Body of pancreas (tissue), 4 donors: ENCODE measurements at regions of chr3 and their contacts with region 1.

Region 1: GRCh38 chr3:168051531-168052471 is 43.9 kb downstream of the GOLIM4 start:
- DNase-seq: no peak
- ATAC-seq: no peak
- H3K4me3 ChIP-seq: no peak overlapping the region
- H3K27ac ChIP-seq: no peak overlapping the region
- H3K4me1 ChIP-seq: peaks cover 18% of the 10 kb centered on the region
- H3K27me3 ChIP-seq: no peaks in the 10 kb centered on the region
- CTCF ChIP-seq: no peak
- POLR2A ChIP-seq: no peak

Region 2: DNA sequence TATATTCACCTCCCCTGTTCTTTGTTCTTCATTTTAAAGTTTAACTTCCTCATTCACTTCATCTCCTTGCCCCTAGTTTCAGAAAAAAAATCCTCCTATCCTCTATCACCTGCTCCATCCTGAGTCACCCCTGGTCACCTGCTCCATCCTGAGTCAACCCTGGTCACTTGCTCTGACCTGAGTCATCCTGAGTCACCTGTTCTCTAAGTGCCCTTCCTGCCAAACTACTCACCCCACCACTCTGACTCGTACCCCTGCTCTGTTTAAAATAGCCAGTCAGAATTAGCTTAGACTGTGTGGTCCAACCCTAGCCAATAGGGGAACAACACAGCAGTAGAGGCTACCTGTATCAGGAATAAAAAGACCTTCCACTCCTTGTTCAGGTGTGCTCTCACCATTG is 1388.6 kb before region 1 on chr3:
- intact Hi-C with region 1: no loop called
- DNase-seq: no peak
- ATAC-seq: no peak
- H3K4me3 ChIP-seq: no peak overlapping the region
- H3K27ac ChIP-seq: no peak overlapping the region
- H3K4me1 ChIP-seq: no peaks in the 10 kb centered on the region
- H3K27me3 ChIP-seq: no peaks in the 10 kb centered on the region
- CTCF ChIP-seq: no peak
- POLR2A ChIP-seq: no peak

Region 3: DNA sequence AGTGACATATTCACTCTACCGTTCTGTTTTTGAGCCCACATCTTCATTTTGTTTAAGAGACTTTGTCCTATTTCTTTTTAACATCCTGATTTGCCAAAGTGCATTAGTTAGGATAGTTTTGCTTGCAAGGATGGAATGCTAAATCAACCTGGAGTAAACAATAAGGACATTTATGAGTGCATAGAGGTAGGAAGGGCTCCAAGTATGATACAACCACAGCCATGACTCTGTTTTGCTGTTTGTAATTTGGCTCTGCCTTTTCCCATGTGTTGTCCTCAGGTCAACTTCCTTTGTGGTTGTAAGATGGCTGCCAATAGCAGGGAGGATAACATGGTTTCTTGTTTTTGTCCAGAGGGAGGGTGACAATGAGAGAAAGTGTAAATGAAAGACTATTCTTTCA is 110.4 kb after region 1 on chr3:
- intact Hi-C with region 1: loop called (anchors 5 kb)
- DNase-seq: no peak
- ATAC-seq: no peak
- H3K4me3 ChIP-seq: no peak overlapping the region
- H3K27ac ChIP-seq: no peak overlapping the region
- H3K4me1 ChIP-seq: no peaks in the 10 kb centered on the region
- H3K27me3 ChIP-seq: no peaks in the 10 kb centered on the region
- CTCF ChIP-seq: no peak
- POLR2A ChIP-seq: no peak